ENCODE measurements at regions of chr10 and their contacts with region 1.

Region 1: GRCh38 chr10:123132576-123133477 is 2.9 kb upstream of the HMX3 start:
- DNase-seq: peak; percentile 66 to 89 (median 72)
- ATAC-seq: peak; percentile 41
- H3K4me3 ChIP-seq: no peak overlapping the region
- H3K27ac ChIP-seq: no peak overlapping the region
- H3K4me1 ChIP-seq: peaks cover 8 to 47% of the 10 kb centered on the region in 2 experiments
- H3K27me3 ChIP-seq: 0 out of 5 replicates have a peak, but pooled peaks cover 0 to 10% of the 10 kb centered on the region in 2 experiments
- CTCF ChIP-seq: peak; percentile 83 to 87 (median 85)
- EP300 ChIP-seq: no peak
- POLR2A ChIP-seq: no peak
- RAD21 ChIP-seq: peak; percentile 63 to 81

Region 2: DNA sequence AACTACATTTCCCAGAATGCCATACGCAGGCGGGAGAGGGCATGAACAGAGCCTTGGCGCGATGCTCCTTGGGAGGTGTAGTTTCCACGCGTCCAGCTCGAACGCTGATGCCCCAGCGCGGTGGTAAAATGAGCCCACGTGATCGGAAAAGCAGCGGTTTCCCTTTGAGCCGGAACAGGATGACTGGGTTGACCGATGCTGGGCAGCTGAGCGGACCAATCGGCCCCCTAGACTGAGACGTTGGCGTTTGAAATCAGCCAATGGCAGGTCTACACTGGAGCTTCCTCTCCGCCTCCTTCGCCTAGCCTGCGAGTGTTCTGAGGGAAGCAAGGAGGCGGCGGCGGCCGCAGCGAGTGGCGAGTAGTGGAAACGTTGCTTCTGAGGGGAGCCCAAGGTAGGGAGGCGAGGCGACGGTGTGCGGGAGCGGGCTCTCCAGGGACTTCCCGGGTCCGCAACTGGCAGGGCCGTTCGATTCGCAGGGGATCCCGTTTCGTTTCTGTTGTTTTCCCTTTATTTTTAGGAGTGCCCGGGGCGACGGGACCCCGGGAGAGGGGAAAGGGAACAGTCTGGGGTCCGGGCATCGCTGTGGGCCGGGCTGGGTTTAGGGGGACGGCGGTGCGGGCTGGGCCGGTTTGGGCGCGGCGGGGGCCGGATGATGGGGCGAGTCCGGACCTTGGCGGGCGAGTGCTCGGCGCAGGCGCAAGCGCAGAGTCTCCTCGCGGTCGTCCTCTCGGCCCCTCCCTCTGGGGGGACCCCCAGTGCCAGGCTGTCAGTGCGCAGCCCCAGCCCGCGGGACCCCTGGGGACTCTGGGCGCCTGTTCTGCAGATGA is 21.5 kb after region 1 on chr10 and contains the start of gene BUB3:
- CTCF ChIA-PET with region 1: no interaction called
- POLR2A ChIA-PET with region 1: interaction called, 34 read pairs
- in situ Hi-C with region 1: no loop called
- intact Hi-C with region 1: no loop called
- DNase-seq: peak; percentile 95 to 97 (median 96)
- ATAC-seq: peak; percentile 97
- H3K4me3 ChIP-seq: peak within 1 kb of the TSS; percentile 90
- H3K27ac ChIP-seq: peak within 1 kb of the TSS; percentile 98
- H3K4me1 ChIP-seq: peaks cover 13 to 25% of the 10 kb centered on the region in 2 experiments; a peak in 3 of 5 replicates
- H3K27me3 ChIP-seq: no peaks in the 10 kb centered on the region
- CTCF ChIP-seq: no peak
- EP300 ChIP-seq: no peak
- POLR2A ChIP-seq: peak; percentile 96
- RAD21 ChIP-seq: no peak
- polyA plus RNA-seq, gene BUB3: 597 to 761 TPM

Region 3: GRCh38 chr10:123272171-123272570 is 139.3 kb after region 1 on chr10:
- CTCF ChIA-PET with region 1: no interaction called
- POLR2A ChIA-PET with region 1: no interaction called
- in situ Hi-C with region 1: no loop called
- intact Hi-C with region 1: loop called (anchors 5 kb)
- DNase-seq: peak in 1 of 4 experiments; percentile 11
- ATAC-seq: no peak
- H3K4me3 ChIP-seq: no peak overlapping the region
- H3K27ac ChIP-seq: no peak overlapping the region
- H3K4me1 ChIP-seq: no peaks in the 10 kb centered on the region
- H3K27me3 ChIP-seq: peaks cover 7 to 24% of the 10 kb centered on the region in 2 experiments; a peak in 3 of 5 replicates
- CTCF ChIP-seq: peak; percentile 25 to 37 (median 37); a peak in 4 of 6 replicates
- EP300 ChIP-seq: no peak
- POLR2A ChIP-seq: no peak
- RAD21 ChIP-seq: 0 out of 4 replicates have a peak, but pooled peaks of 1 of the 2 experiments have one; percentile 19

Region 4: GRCh38 chr10:123380497-123381085 is 247.8 kb after region 1 on chr10:
- CTCF ChIA-PET with region 1: no interaction called
- POLR2A ChIA-PET with region 1: no interaction called
- in situ Hi-C with region 1: no loop called
- intact Hi-C with region 1: loop called (anchors 2 kb)
- DNase-seq: peak in 1 of 4 experiments; percentile 2
- ATAC-seq: no peak
- H3K4me3 ChIP-seq: no peak overlapping the region
- H3K27ac ChIP-seq: no peak overlapping the region
- H3K4me1 ChIP-seq: no peaks in the 10 kb centered on the region
- H3K27me3 ChIP-seq: peaks cover 0 to 3% of the 10 kb centered on the region in 2 experiments; a peak in 1 of 5 replicates
- CTCF ChIP-seq: peak in 2 of 3 experiments; percentile 9 to 49; a peak in 3 of 6 replicates
- EP300 ChIP-seq: no peak
- POLR2A ChIP-seq: no peak
- RAD21 ChIP-seq: peak; percentile 50 to 66